ENCODE measurements at regions of chr3 and their contacts with region 1.

Region 1: GRCh38 chr3:48548729-48549705 is 7.6 kb downstream of the PFKFB4 start:
- DNase-seq: no peak
- H3K4me3 ChIP-seq: no peak overlapping the region
- CTCF ChIP-seq: peak; percentile 95

Region 2: DNA sequence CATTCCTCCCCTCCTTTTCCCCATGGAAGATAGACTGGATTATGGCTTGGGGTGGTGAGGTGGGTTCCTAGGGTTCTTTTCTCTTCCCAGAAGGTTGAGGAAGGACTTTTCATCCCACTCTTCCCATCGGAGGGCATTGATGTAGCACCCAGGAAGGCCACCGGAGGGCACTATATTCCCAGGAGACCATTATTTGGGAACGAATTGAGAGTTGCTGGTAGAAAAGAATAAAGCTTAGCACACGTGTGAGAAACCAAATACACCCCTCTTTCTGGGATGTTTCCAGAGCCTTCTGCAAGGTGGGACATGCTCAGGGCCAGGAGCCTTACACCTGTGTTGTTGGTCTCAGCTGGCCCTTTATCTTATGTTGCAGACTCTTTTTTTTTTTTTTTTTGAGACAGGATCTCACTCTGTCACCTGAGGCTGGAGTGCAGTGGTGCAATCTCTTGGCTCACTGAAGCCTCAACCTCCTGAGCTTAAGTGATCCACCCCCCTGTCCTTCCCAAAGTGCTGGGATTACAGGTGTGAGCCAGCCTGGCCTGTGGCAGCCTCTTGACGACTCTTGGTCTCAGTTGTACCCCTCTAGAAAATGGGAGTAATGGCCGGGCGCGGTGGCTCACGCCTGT is 354.5 kb before region 1 on chr3:
- CTCF ChIA-PET with region 1: interaction called, 12 read pairs
- POLR2A ChIA-PET with region 1: no interaction called
- DNase-seq: no peak
- H3K4me3 ChIP-seq: no peak overlapping the region
- CTCF ChIP-seq: peak; percentile 79

Region 3: GRCh38 chr3:48208076-48208475 is 340.9 kb before region 1 on chr3:
- CTCF ChIA-PET with region 1: no interaction called
- POLR2A ChIA-PET with region 1: no interaction called
- DNase-seq: no peak
- H3K4me3 ChIP-seq: no peak overlapping the region
- CTCF ChIP-seq: no peak

Region 4: DNA sequence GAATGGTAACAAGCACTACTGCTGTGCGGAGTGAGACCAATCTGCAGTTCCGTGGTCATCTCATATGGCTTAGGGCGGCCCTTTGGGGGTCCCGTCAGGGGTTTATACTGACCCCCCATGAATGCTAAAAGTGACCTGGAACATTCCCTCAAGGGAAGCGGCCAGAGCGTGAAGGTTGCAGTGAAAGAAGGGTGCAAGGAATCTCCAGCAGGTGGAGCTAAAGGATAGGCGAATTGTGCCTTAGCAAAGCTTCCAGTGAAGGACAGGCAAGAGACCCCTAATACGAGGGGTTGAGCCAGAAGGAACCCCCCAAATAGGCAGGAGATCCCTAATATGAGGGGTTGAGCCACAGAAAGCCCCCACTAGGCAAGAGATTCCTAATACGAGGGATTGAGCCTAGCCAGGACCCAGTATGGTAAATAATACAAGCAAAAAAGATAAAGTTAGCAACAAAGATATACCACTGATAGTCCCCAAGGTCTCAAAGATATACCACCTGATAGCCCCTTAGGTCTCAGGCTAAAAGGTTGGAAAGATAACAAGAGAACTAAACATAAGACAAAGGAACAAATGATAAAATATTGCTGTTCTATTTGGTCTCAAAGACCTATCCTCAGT is 275.3 kb before region 1 on chr3:
- CTCF ChIA-PET with region 1: interaction called, 11 read pairs
- POLR2A ChIA-PET with region 1: no interaction called
- DNase-seq: no peak
- H3K4me3 ChIP-seq: no peak overlapping the region
- CTCF ChIP-seq: peak; percentile 76

Region 5: GRCh38 chr3:48446425-48447193 is 102.4 kb before region 1 on chr3 and contains the start of gene ATRIP:
- CTCF ChIA-PET with region 1: interaction called, 28 read pairs
- POLR2A ChIA-PET with region 1: no interaction called
- DNase-seq: no peak
- H3K4me3 ChIP-seq: peak within 1 kb of the TSS; percentile 97
- CTCF ChIP-seq: no peak

Region 6: DNA sequence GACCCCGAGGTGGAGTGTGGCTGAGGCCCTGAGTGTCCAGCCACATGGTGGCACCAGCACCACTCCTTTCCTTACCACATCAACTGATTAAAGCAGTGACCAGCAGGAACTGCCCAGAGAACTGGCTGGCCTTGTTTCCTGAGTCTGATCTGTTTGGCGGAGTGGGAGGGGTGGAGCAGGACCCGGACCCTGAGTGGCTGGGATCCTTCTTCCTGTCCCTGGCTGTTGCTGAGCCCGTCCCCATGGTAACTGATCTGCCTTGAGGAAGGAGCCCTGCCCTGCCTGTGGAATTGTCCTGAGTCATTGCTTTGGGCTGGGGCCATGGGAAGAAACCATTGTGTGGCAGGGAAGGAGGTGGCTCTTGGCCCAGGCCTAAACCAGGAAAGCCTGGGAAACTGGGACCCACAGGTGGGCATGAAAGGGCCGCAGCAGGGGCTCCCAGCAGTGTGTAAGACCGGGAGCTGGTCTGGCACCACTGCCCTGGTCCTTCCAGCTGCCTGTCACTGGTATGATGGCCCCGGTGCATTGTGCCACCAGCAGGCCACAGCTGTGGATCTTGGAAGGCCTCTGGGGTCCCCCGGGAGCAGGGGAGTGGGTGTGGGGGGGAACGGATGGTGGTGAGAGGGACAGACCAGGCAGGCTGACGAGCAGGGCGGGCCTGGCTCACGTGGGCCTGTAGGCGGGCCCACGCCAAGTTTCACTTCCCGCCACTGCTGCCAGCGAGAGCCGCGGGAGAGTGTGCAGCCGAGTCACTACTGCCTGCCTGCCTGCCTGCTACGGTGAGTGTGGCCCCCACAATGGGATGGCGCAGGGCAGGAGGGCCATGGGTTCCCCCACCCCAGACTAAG is 83.3 kb before region 1 on chr3:
- CTCF ChIA-PET with region 1: interaction called, 106 read pairs
- POLR2A ChIA-PET with region 1: no interaction called
- DNase-seq: peak; percentile 97
- H3K4me3 ChIP-seq: peak overlapping the region; percentile 57
- CTCF ChIP-seq: peak; percentile 72

Region 7: GRCh38 chr3:48472915-48473616 is 76.0 kb before region 1 on chr3:
- CTCF ChIA-PET with region 1: interaction called, 106 read pairs
- POLR2A ChIA-PET with region 1: no interaction called
- DNase-seq: peak; percentile 45
- H3K4me3 ChIP-seq: peak overlapping the region; percentile 85
- CTCF ChIP-seq: peak; percentile 46

Region 8: GRCh38 chr3:48535578-48535977 is 13.4 kb before region 1 on chr3:
- CTCF ChIA-PET with region 1: interaction called, 20 read pairs
- POLR2A ChIA-PET with region 1: no interaction called
- DNase-seq: no peak
- H3K4me3 ChIP-seq: no peak overlapping the region
- CTCF ChIP-seq: no peak